ENCODE measurements at regions of chr13 and their contacts with region 1.

Region 1: GRCh38 chr13:40777166-40777808 is 6.3 kb upstream of the MRPS31 start:
- DNase-seq: peak; percentile 56
- CTCF ChIP-seq: peak; percentile 59

Region 2: GRCh38 chr13:39942552-39943273 is 834.6 kb before region 1 on chr13:
- CTCF ChIA-PET with region 1: interaction called, 12 read pairs
- POLR2A ChIA-PET with region 1: no interaction called
- DNase-seq: peak; percentile 77
- CTCF ChIP-seq: peak; percentile 100

Region 3: DNA sequence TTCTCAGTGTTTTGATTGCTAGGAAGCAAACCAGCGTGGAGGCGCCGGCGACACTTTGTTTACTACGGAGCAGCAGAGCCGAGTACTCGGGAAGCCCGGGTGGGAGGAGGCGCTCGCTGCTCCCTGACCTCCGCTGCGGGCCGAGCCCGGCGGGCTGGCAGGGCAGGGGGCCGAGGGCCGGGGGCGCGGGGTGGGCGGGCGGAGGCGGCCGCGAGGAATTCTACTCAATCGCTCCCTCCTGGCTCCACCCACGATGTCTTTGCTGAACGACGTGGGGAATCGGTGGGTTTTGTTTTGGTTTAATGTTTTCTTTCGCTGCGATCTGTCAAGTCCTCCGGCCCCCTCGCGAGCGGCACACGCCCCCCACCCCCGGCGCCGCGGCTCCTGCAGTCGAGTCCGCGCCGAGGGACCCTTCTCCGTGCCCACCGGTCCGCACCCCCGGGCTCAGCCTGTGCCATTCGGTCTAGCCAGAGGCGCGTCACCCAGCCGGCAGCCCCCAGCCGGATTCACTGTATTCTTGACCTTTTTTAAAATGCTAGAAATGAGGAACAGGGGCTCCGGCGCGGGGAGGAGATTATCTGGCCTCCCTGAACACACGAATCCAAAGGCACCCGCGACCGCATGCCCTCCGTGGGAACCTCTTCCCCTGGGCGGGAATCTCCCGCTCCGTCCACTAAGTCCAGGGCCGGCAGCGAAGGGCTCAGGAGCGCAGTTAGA is 110.2 kb before region 1 on chr13:
- CTCF ChIA-PET with region 1: interaction called, 12 read pairs
- POLR2A ChIA-PET with region 1: no interaction called
- DNase-seq: peak; percentile 36
- CTCF ChIP-seq: no peak

Region 4: DNA sequence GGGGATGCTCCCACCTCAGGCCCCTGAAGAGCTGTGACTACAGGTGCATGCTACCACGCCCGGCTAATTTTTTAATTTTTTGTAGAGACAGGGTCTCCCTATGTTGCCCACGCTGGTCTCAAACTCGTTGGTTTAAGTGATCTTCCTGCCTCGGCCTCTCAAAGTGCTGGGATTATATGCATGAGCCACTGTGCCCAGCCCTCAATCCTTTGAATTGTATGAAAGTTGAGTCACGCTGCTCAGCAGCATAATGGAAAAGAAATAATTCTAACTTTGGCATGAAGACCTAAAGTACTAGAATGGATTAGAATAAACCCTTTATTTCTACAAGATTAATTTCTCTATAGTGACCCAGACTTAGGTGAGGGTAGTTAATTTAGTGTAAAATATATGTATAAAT is 48.7 kb before region 1 on chr13:
- CTCF ChIA-PET with region 1: no interaction called
- POLR2A ChIA-PET with region 1: no interaction called
- DNase-seq: no peak
- CTCF ChIP-seq: no peak

Region 5: DNA sequence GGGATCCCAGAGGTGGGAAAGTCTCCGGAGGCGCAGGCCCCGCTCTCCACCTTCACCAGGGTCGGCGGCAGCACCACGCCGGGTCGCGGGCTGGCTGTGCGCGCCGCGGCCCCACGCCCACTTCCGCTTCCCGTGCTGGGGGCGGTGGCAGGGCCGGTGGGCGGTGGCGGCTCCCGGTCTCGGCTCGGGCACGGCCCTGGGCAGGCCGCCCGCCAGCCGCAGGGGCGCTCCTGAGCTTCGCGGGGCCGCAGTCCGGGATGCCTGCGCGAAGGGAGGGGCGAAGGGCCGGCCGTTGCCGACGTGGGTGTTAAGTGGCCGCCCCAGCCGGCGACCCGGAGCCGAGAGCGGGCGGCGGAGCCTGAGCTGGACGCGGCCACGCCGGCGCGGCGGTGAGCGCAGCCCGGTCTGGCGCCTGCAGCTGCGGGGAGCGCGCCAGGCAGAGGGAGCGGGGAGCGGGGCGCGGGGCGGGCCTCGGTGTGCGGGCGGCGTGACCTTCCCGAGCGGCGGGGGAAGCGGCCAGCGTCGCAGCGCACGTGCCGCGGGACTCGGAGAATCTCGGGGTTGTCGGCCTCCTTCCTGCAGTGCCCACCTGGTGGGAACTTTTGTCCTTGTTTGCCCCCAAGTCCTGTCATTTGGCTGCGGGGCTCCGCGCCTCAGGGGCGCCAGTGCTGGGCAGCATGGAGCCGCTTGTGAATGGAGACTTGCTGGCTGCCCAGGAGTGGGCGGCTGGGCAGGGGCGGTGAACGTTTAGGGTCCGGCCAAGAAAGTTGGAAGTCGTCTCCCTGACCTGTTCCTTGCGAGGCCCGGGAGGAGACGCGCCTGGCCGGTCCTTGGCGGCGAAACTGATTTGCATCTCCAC is 12.2 kb after region 1 on chr13 and contains the start of gene SLC25A15:
- CTCF ChIA-PET with region 1: interaction called, 63 read pairs
- POLR2A ChIA-PET with region 1: no interaction called
- DNase-seq: peak; percentile 89
- CTCF ChIP-seq: peak; percentile 43

Region 6: DNA sequence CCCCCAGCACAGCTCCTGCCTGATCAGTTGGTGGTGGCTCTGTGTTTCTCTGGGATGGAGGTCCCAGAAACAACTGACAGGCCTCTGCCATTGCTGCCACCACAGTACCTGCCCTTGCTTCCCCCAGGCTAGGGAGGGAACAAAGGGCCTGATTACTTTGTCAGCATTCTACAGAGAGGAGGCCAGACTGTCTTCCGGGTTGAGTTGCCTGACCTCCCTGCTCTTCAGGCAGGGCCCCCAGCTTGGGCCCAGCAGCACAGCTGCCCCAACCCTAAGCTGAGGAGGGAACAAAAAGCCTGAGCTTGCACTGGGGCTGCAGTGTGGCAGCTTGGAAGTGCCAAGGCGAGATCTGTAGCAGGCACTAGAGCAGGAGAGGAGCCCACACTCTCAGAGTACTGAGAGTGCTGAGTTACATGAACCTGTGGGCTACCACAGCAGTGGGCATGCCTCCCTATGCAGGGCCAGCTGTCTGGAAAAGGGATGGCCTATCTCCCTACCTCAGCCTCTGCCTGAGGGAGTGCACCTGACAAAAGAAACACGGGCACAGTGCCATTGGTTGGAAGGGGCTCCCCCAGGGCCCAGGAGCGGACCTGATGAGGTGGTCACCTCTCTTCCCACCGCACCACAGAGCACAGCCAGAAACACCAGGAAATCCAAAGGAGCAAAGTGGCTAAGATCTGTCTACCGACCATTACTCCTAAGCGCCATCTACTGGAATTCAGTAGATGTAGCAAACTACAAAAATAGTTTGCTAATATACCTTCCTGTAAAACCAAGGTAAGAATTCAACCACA is 36.6 kb after region 1 on chr13:
- CTCF ChIA-PET with region 1: interaction called, 11 read pairs
- POLR2A ChIA-PET with region 1: no interaction called
- DNase-seq: peak; percentile 59
- CTCF ChIP-seq: no peak

Region 7: DNA sequence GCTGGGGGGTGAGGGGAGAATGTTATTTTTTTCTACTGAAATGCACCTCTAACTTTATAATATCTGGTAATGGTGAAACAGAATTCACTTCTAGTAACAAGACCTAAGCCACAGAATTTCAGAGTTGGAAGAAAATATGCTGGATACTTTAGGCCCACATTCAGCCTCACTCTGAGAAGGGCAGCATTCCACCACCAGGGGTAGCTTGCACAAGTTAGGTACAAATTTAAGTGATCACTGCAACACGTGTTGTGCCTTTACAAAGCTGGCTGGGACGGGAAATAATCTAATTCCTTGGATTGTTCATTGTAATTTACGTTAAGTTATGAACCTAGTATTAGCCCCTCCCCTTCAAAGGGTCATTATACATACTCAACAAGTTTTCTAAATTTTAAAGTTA is 872.4 kb after region 1 on chr13:
- CTCF ChIA-PET with region 1: no interaction called
- POLR2A ChIA-PET with region 1: no interaction called
- DNase-seq: no peak
- CTCF ChIP-seq: no peak